Panc1 (cell line): ENCODE measurements at regions of chr13 and their contacts with region 1.

Region 1: DNA sequence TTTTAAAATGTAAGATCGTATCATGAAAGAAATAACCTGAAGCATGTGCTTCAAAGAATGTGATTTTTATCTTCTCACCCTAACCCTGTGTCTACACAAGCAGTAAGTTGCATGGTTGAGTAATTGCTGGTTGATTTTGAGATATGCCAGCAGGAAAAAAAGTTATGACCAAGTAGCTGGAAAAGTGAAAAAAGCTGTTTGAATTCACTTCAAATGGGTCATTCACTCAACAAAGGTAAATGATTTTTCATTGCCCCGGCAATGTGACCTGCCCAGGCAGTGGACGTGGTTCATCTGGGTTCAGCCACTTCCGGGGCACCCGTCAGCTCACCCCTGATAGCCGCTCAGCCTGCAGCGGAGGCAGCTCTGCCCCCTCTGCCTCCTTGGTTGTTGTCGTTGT is 18.4 kb downstream of the TNFRSF19 start:
- DNase-seq: no peak
- ATAC-seq: no peak
- H3K4me3 ChIP-seq: no peak overlapping the region
- H3K27ac ChIP-seq: no peak overlapping the region
- H3K4me1 ChIP-seq: no peaks in the 10 kb centered on the region
- H3K27me3 ChIP-seq: peaks cover 4% of the 10 kb centered on the region; the same call in 1 of the 2 replicates
- CTCF ChIP-seq: no peak

Region 2: DNA sequence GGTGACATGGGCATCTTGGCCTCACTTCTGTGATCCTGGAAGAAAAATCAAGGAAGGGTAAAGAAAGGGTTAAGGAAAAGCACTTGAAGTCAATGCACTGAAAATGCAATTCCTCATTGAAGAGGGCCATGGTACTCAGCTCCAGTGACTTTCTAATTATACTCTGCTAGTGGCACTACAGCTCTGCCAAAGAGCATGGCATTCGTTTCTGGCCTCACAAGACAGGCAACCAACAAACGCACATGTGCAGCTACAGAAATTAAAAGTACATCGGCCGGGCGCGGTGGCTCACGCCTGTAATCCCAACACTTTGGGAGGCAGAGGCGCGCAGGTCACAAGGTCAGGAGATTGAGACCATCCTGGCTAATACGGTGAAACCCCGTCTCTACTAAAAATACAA is 176.9 kb before region 1 on chr13:
- CTCF ChIA-PET with region 1: no interaction called
- POLR2A ChIA-PET with region 1: no interaction called
- in situ Hi-C with region 1: no loop called
- intact Hi-C with region 1: no loop called
- DNase-seq: no peak
- ATAC-seq: no peak
- H3K4me3 ChIP-seq: no peak overlapping the region
- H3K27ac ChIP-seq: no peak overlapping the region
- H3K4me1 ChIP-seq: no peaks in the 10 kb centered on the region
- H3K27me3 ChIP-seq: no peaks in the 10 kb centered on the region
- CTCF ChIP-seq: no peak

Region 3: GRCh38 chr13:23667750-23668149 is 79.1 kb after region 1 on chr13:
- CTCF ChIA-PET with region 1: no interaction called
- POLR2A ChIA-PET with region 1: interaction called, 10 read pairs
- in situ Hi-C with region 1: no loop called
- intact Hi-C with region 1: no loop called
- DNase-seq: no peak
- ATAC-seq: no peak
- H3K4me3 ChIP-seq: no peak overlapping the region
- H3K27ac ChIP-seq: no peak overlapping the region
- H3K4me1 ChIP-seq: no peaks in the 10 kb centered on the region
- H3K27me3 ChIP-seq: no peaks in the 10 kb centered on the region; the same call in 1 of the 2 replicates
- CTCF ChIP-seq: peak; percentile 20

Region 4: DNA sequence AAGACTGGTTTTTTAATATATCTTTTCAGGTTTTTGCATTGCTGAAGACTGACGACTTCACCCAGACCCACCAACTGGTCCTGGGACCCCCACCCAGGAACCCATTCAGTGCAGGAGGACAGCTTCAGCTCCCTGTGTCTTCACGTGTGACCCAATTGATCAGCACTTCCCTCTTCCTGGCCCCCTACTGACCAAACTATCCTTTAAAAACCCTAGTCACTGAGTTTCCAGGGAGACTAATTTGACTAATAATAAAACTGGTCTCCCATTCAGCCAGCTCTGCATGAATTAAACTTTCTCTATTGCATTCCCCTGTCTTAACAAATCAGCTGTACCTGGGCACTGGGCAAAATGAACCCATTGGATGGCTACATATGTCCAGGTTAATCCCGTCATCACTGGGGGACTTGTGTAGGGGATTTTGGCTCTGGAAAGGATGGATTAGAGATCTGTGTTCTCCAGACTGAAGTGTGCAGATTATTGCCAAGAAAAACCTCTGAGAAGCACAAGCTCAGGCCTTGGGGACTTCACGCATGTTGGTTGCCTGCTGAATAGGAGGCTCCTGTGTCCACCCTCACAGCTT is 940.3 kb after region 1 on chr13:
- CTCF ChIA-PET with region 1: no interaction called
- POLR2A ChIA-PET with region 1: no interaction called
- in situ Hi-C with region 1: no loop called
- intact Hi-C with region 1: no loop called
- DNase-seq: no peak
- ATAC-seq: no peak
- H3K4me3 ChIP-seq: no peak overlapping the region
- H3K27ac ChIP-seq: no peak overlapping the region
- H3K4me1 ChIP-seq: no peaks in the 10 kb centered on the region
- H3K27me3 ChIP-seq: peaks cover 5% of the 10 kb centered on the region
- CTCF ChIP-seq: no peak